CD14-positive monocyte (primary cell): ENCODE measurements at regions of chr17 and their contacts with region 1.

Region 1: DNA sequence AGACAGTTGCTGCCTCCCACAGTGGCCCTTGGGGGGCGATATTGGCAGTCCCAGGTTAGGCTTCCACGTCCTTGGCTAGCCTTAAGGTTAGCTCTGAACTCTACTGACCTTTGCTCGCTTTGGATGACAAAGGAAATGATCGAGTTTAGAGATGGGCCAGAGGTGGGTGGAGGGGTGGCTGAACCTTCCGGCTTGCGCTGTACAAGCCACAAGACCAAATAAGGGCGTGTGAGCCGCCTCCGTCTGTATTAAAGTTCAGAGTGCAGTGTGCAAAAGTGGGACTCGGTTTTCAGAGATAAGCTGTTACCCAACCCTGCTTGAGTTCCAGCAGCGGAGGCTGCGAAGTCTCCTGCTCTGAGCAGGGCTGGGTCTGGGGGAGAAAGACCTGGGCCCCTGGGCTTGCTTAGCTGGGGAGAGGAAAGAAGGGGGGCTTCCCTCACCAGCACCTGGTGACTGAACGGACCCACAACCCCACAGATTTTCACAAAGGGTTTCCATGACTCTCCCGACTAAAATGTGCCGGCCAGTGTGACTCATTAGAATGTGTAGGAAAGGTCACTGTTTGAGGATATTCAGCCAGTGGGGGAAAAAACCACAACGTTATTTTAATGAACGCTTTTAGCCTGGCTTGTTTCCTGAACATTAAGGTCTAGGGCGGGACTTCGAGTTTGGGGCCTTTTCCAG is 67.2 kb downstream of the CENPV start:
- DNase-seq: peak; percentile 65 to 69 (median 66)
- H3K4me3 ChIP-seq: peak overlapping the region; percentile 6 to 68 (median 17)
- H3K4me3 Mint-ChIP-seq: peak overlapping the region; percentile 73 to 84
- H3K27ac ChIP-seq: peak overlapping the region; percentile 88 to 89
- H3K27ac Mint-ChIP-seq: peak overlapping the region; percentile 92 to 97 (median 96)
- H3K4me1 ChIP-seq: peaks cover 50 to 58% of the 10 kb centered on the region in 2 donors
- H3K4me1 Mint-ChIP-seq: peaks cover 60% of the 10 kb centered on the region
- H3K27me3 ChIP-seq: no peaks in the 10 kb centered on the region
- H3K27me3 Mint-ChIP-seq: no peaks in the 10 kb centered on the region
- CTCF ChIP-seq: peak; percentile 57

Region 2: GRCh38 chr17:16215273-16215964 is 70.7 kb before region 1 on chr17 and contains the start of gene NCOR1:
- intact Hi-C with region 1: loop called in 1 of 2 experiments (anchors 5 kb)
- DNase-seq: peak; percentile 84 to 87 (median 86)
- H3K4me3 ChIP-seq: peak within 1 kb of the TSS; percentile 64 to 89 (median 68)
- H3K4me3 Mint-ChIP-seq: peak within 1 kb of the TSS; percentile 94 to 97
- H3K27ac ChIP-seq: peak within 1 kb of the TSS; percentile 83 to 89
- H3K27ac Mint-ChIP-seq: peak within 1 kb of the TSS; percentile 85 to 97 (median 89)
- H3K4me1 ChIP-seq: peaks cover 31 to 46% of the 10 kb centered on the region in 2 donors
- H3K4me1 Mint-ChIP-seq: peaks cover 40% of the 10 kb centered on the region
- H3K27me3 ChIP-seq: no peaks in the 10 kb centered on the region
- H3K27me3 Mint-ChIP-seq: no peaks in the 10 kb centered on the region
- CTCF ChIP-seq: peak; percentile 28
- polyA plus RNA-seq, gene NCOR1: 23.2 to 47.0 (median 37.9) TPM

Region 3: GRCh38 chr17:16353317-16354174 is 67.4 kb after region 1 on chr17 and contains the start of gene CENPV:
- intact Hi-C with region 1: loop called in 1 of 2 experiments (anchors 10 kb)
- DNase-seq: peak in 2 of 3 donors; percentile 24 to 27
- H3K4me3 ChIP-seq: peak within 1 kb of the TSS; percentile 33 to 77 (median 55)
- H3K4me3 Mint-ChIP-seq: peak within 1 kb of the TSS; percentile 83 to 93
- H3K27ac ChIP-seq: no peak within 1 kb of the TSS
- H3K27ac Mint-ChIP-seq: peak within 1 kb of the TSS in 1 of 7 donors; percentile 55
- H3K4me1 ChIP-seq: peaks cover 15 to 18% of the 10 kb centered on the region in 2 donors
- H3K4me1 Mint-ChIP-seq: peaks cover 17% of the 10 kb centered on the region
- H3K27me3 ChIP-seq: peaks cover 21 to 33% of the 10 kb centered on the region in 2 donors
- H3K27me3 Mint-ChIP-seq: peaks cover 48 to 59% (median 55%) of the 10 kb centered on the region in 3 donors
- CTCF ChIP-seq: peak; percentile 12
- polyA plus RNA-seq, gene CENPV: 0.50 to 1.1 (median 0.80) TPM